ENCODE measurements at regions of chr6 and their contacts with region 1.

Region 1: DNA sequence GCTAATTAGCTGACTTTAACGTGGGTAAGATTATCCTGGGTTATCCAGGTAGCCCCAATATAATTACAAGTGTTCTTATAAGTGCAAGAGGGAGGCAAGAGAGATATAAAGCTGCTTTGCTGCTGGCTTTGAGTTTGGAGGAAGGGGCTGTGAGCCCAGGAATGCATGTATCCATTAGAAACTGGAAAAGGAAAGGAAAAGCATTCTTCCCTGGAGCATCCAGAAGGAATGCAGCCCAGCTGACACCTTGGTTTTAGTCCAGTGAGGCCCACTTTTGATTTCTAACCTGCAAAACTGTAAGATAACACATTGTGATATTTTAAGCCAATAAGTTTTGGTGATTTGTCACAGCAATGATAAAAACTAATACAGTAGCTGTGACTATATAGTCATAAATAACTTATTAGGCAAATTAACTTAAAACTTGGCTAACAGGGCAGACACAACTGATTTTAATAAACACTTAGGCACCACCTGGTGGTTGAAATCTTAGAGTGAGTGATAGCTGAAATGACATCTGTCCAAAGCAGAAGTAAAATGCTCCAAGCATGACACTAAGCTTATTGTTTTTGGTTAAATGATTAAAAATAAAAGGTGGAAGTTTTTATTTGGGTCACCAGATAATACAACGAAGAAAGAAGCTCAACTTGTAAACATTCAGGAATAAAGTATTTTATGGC is 35.6 kb downstream of the ADGRF4 start:
- DNase-seq: peak; percentile 48
- H3K4me3 Mint-ChIP-seq: no peak overlapping the region
- H3K27ac Mint-ChIP-seq: no peak overlapping the region
- H3K4me1 Mint-ChIP-seq: peaks cover 45% of the 10 kb centered on the region
- H3K27me3 Mint-ChIP-seq: no peaks in the 10 kb centered on the region
- CTCF ChIP-seq: peak; percentile 54

Region 2: DNA sequence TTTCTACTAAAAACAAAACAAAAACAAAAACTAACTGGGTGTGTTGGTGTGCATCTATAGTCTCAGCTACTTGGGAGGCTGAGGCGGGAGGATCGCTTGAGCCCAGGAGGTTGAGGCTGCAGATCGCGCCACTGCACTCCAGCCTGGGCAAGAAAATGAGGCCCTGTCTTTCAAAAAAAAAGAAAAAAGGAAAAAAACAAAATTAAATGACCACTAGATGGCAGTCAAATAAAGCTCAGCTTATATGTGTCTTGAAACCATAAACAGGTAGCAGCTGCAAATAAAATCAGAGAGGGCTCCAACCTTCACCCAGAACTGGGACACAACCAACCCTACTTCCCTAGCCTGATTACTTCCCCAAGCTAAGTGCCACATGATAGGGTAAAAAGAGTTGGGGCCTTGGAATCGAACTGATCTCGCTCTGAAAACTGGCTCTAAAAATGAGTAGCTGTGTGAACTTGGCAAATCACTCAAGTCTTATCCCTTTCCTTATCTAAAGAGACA is 102.7 kb before region 1 on chr6:
- CTCF ChIA-PET with region 1: interaction called, 22 read pairs
- intact Hi-C with region 1: loop called (anchors 1 kb)
- DNase-seq: no peak
- H3K4me3 Mint-ChIP-seq: no peak overlapping the region
- H3K27ac Mint-ChIP-seq: peak overlapping the region; percentile 59
- H3K4me1 Mint-ChIP-seq: peaks cover 36% of the 10 kb centered on the region
- H3K27me3 Mint-ChIP-seq: no peaks in the 10 kb centered on the region
- CTCF ChIP-seq: no peak

Region 3: GRCh38 chr6:47651505-47651944 is 82.5 kb before region 1 on chr6:
- CTCF ChIA-PET with region 1: interaction called, 8 read pairs
- intact Hi-C with region 1: loop called (anchors 5 kb)
- DNase-seq: no peak
- H3K4me3 Mint-ChIP-seq: no peak overlapping the region
- H3K27ac Mint-ChIP-seq: no peak overlapping the region
- H3K4me1 Mint-ChIP-seq: peaks cover 33% of the 10 kb centered on the region
- H3K27me3 Mint-ChIP-seq: no peaks in the 10 kb centered on the region
- CTCF ChIP-seq: no peak